HepG2 (cell line): ENCODE measurements at regions of chr6 and their contacts with region 1.

Region 1: DNA sequence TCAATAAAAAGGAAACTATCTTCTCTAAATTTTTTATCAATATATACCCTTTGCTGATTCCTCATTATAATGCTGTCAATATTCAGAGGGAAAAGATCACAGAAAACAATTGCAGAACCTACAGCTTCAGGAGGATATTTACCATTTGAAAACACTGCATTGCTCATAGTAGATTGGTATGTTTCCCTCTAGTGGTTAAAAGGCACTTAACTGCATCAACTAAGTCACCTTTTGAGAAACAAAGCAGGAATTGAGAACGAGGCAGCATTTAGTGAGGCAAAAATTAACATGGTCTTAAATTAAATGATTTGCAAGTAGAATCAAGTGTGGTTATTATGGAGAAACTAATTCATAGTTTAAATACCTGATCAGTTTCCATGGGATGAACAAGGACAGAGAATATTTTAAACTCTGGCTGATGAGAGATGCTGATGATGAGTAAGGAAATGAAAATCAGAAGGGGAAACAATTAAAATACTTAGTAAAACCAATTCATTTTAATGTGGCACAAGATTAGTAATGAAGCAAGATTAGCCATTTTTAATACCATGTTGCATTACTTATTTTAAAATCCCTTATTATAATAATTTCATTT is 642.1 kb downstream of the EPHA7 start:
- DNase-seq: peak; percentile 12
- ATAC-seq: peak; percentile 76
- H3K4me3 ChIP-seq: no peak overlapping the region
- H3K27ac ChIP-seq: no peak overlapping the region
- H3K4me1 ChIP-seq: no peaks in the 10 kb centered on the region
- H3K27me3 ChIP-seq: no peaks in the 10 kb centered on the region
- CTCF ChIP-seq: peak; percentile 33
- EP300 ChIP-seq: no peak
- POLR2A ChIP-seq: no peak
- RAD21 ChIP-seq: no peak

Region 2: DNA sequence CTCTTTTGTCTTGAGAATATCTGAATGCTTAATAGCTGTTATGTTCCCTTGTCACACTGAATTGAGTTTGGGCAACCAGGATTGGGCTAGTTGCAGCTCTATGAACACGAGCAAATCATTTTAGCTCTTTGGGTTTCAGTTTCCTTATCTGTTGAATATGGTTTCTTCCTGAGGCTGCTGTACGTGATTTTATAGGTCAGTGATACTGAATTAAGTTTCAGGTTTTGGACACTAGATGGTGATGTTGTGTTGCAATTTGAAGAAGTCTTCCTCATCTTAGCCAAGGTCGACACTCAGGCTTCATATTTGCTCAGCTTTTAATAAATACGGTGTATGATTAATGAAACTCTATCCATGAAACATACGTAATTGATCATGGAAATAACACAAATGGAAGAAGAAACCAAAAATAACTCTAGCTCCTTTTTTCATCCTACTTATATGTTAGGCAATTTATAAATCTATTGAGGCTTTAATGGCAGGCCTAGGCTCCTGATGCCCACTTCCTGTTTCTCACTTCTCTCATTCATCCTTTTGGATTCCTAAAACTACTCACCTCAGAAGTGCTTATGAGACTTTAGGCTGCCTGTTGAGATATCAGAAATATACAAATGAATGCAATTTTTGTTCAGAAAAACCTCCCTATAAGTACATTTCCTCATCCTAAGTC is 1836.3 kb before region 1 on chr6:
- CTCF ChIA-PET with region 1: interaction called, 3 read pairs
- POLR2A ChIA-PET with region 1: no interaction called
- in situ Hi-C with region 1: no loop called
- intact Hi-C with region 1: loop called (anchors 2 kb)
- DNase-seq: peak; percentile 44
- ATAC-seq: peak; percentile 85
- H3K4me3 ChIP-seq: no peak overlapping the region
- H3K27ac ChIP-seq: no peak overlapping the region
- H3K4me1 ChIP-seq: no peaks in the 10 kb centered on the region
- H3K27me3 ChIP-seq: no peaks in the 10 kb centered on the region; a peak in 2 of 5 replicates
- CTCF ChIP-seq: peak; percentile 69
- EP300 ChIP-seq: no peak
- POLR2A ChIP-seq: no peak
- RAD21 ChIP-seq: peak; percentile 49

Region 3: DNA sequence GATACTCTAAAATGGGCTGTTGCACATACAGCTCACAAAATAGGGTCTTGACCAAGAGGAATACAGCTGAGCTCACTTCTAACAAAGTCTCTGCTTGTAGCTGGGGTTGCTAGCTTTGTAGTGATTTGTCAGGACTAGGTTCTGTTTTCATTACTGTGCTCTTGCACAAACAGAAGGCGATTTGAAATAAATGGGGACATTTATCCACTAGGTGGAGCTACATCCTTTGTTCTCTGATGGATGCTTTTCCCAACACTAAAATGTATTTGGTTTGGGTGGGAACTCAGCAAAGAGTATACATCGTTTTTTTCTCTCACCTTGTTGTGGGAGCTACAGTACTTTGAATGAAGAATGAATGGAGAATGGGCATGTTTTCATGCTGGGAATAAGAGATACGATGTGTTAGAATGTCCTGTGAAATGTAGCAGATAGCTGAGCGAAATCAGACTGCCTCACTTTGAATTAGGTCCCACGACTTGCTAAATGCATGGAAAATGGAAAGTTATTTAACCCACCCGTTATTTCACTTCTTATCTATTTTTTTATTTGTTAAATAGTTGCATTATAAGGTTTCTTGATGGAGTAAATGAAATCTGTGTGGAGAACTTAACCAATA is 1695.7 kb before region 1 on chr6:
- CTCF ChIA-PET with region 1: interaction called, 4 read pairs
- POLR2A ChIA-PET with region 1: no interaction called
- in situ Hi-C with region 1: no loop called
- intact Hi-C with region 1: loop called (anchors 5 kb)
- DNase-seq: peak; percentile 25
- ATAC-seq: peak; percentile 76
- H3K4me3 ChIP-seq: no peak overlapping the region
- H3K27ac ChIP-seq: no peak overlapping the region
- H3K4me1 ChIP-seq: no peaks in the 10 kb centered on the region
- H3K27me3 ChIP-seq: no peaks in the 10 kb centered on the region
- CTCF ChIP-seq: peak; percentile 76
- EP300 ChIP-seq: no peak
- POLR2A ChIP-seq: no peak
- RAD21 ChIP-seq: peak; percentile 45; the same call in 1 of the 2 replicates

Region 4: DNA sequence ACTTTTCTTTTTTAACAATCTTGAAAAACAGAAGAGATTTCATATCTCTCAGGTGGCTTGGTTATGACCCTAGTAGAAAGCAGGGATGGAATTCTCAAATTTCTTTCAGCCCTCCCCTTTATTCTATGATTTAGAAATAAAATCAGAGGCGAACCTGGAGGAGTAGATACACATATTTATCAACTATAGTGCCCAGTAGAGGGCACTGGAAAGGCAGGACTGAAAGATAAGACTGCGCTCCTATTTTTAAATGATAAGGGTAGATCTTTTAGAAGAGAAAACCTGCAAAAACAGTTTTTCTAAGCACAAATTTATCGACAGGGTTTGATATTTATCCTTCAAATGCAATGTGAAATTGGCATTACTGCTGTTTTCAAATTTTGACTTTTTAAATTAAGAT is 654.5 kb before region 1 on chr6:
- CTCF ChIA-PET with region 1: no interaction called
- POLR2A ChIA-PET with region 1: no interaction called
- in situ Hi-C with region 1: no loop called
- intact Hi-C with region 1: loop called (anchors 5 kb)
- DNase-seq: peak; percentile 11
- ATAC-seq: peak; percentile 63; the same call in 2 of the 3 replicates
- H3K4me3 ChIP-seq: no peak overlapping the region
- H3K27ac ChIP-seq: no peak overlapping the region
- H3K4me1 ChIP-seq: no peaks in the 10 kb centered on the region
- H3K27me3 ChIP-seq: no peaks in the 10 kb centered on the region
- CTCF ChIP-seq: peak; percentile 41
- EP300 ChIP-seq: no peak
- POLR2A ChIP-seq: no peak
- RAD21 ChIP-seq: no peak

Region 5: GRCh38 chr6:92790381-92790780 is 13.1 kb after region 1 on chr6:
- CTCF ChIA-PET with region 1: no interaction called
- POLR2A ChIA-PET with region 1: no interaction called
- in situ Hi-C with region 1: no loop called
- intact Hi-C with region 1: no loop called
- DNase-seq: no peak
- ATAC-seq: no peak
- H3K4me3 ChIP-seq: no peak overlapping the region
- H3K27ac ChIP-seq: no peak overlapping the region
- H3K4me1 ChIP-seq: no peaks in the 10 kb centered on the region
- H3K27me3 ChIP-seq: no peaks in the 10 kb centered on the region
- CTCF ChIP-seq: no peak
- EP300 ChIP-seq: no peak
- POLR2A ChIP-seq: no peak
- RAD21 ChIP-seq: no peak